Ascending aorta (tissue), 2 donors: ENCODE measurements at regions of chr9 and their contacts with region 1.

Region 1: GRCh38 chr9:100426530-100427428 is at the start of gene MSANTD3:
- DNase-seq: peak in 1 of 2 donors; percentile 78
- H3K4me3 ChIP-seq: peak within 1 kb of the TSS; percentile 91 to 99
- H3K27ac ChIP-seq: peak within 1 kb of the TSS; percentile 89 to 94
- H3K4me1 ChIP-seq: peaks cover 0 to 26% of the 10 kb centered on the region in 2 donors
- H3K27me3 ChIP-seq: no peaks in the 10 kb centered on the region
- CTCF ChIP-seq: peak in 1 of 3 experiments; percentile 60
- total RNA-seq, gene MSANTD3: 2.8 TPM

Region 2: GRCh38 chr9:100098887-100099721 is 327.7 kb before region 1 on chr9 and contains the starts of genes ERP44 and INVS:
- intact Hi-C with region 1: loop called (anchors 5 kb)
- DNase-seq: peak; percentile 98 to 100
- H3K4me3 ChIP-seq: peak within 1 kb of the TSS; percentile 62 to 77
- H3K27ac ChIP-seq: peak within 1 kb of the TSS; percentile 79 to 81
- H3K4me1 ChIP-seq: peaks cover 0 to 16% of the 10 kb centered on the region in 2 donors
- H3K27me3 ChIP-seq: no peaks in the 10 kb centered on the region
- CTCF ChIP-seq: no peak
- total RNA-seq, gene ERP44: 10.7 TPM
- total RNA-seq, gene INVS: 8.5 TPM

Region 3: GRCh38 chr9:100352727-100353505 is 73.9 kb before region 1 on chr9 and contains the start of gene TEX10:
- intact Hi-C with region 1: loop called (anchors 2 kb)
- DNase-seq: peak; percentile 18 to 93
- H3K4me3 ChIP-seq: peak within 1 kb of the TSS; percentile 97
- H3K27ac ChIP-seq: peak within 1 kb of the TSS; percentile 78 to 85
- H3K4me1 ChIP-seq: peaks cover 3% of the 10 kb centered on the region in 2 donors
- H3K27me3 ChIP-seq: no peaks in the 10 kb centered on the region
- CTCF ChIP-seq: no peak
- total RNA-seq, gene TEX10: 2.3 TPM

Region 4: GRCh38 chr9:100411472-100412283 is 15.1 kb before region 1 on chr9:
- intact Hi-C with region 1: loop called (anchors 1 kb)
- DNase-seq: peak; percentile 44 to 94
- H3K4me3 ChIP-seq: peak overlapping the region; percentile 60 to 78
- H3K27ac ChIP-seq: no peak overlapping the region
- H3K4me1 ChIP-seq: no peaks in the 10 kb centered on the region
- H3K27me3 ChIP-seq: no peaks in the 10 kb centered on the region
- CTCF ChIP-seq: no peak